WTC11 (cell line): ENCODE measurements at regions of chr9 and their contacts with region 1.

Region 1: DNA sequence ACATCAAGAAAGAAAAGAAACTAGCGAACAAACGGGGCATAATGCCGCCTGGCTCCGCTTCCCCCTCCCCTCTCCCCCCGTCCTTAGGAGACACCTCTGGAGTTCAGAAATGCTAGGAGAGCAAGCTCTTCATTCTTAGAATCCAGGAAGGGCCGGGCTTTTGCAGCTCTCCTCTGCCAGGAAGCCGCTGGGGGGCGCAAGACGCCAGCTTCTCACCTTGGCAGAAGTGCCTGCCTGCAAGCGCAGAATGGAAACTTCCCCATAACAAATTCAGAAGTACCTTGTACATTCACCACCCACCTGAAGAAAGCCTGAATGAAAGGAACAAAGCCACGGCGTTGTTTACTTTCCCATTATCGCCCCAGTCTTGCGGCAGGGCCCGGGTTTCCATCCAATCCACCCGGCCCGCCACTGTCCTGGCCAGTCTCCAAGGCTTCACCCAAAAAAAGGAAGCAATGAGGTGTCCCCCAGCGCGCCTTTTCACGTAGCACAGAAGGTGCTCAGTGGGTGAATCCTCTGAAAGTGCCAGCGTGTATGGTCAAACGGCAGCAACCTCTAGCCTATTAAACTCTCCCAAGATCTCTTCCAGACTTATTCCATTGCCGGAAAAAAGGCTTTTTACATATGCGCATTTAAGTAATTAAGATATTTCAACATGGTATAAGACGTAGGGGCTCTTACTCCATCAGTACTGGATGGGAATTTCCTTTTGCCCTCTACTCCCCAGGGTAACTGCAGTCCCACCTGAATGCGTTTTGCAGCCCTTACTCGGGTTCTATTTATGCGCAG is 1.6 kb upstream of the GADD45G start:
- DNase-seq: peak; percentile 96
- ATAC-seq: peak; percentile 18
- H3K4me3 Mint-ChIP-seq: peak overlapping the region; percentile 77
- H3K27ac Mint-ChIP-seq: peak overlapping the region; percentile 83
- H3K4me1 Mint-ChIP-seq: peaks cover 20% of the 10 kb centered on the region
- H3K27me3 Mint-ChIP-seq: peaks cover 28% of the 10 kb centered on the region
- CTCF ChIP-seq: peak; percentile 66

Region 2: GRCh38 chr9:89437000-89437631 is 166.1 kb before region 1 on chr9:
- CTCF ChIA-PET with region 1: no interaction called
- POLR2A ChIA-PET with region 1: no interaction called
- DNase-seq: no peak
- ATAC-seq: no peak
- H3K4me3 Mint-ChIP-seq: no peak overlapping the region
- H3K27ac Mint-ChIP-seq: peak overlapping the region; percentile 100
- H3K4me1 Mint-ChIP-seq: peaks cover 90% of the 10 kb centered on the region
- H3K27me3 Mint-ChIP-seq: no peaks in the 10 kb centered on the region
- CTCF ChIP-seq: no peak

Region 3: DNA sequence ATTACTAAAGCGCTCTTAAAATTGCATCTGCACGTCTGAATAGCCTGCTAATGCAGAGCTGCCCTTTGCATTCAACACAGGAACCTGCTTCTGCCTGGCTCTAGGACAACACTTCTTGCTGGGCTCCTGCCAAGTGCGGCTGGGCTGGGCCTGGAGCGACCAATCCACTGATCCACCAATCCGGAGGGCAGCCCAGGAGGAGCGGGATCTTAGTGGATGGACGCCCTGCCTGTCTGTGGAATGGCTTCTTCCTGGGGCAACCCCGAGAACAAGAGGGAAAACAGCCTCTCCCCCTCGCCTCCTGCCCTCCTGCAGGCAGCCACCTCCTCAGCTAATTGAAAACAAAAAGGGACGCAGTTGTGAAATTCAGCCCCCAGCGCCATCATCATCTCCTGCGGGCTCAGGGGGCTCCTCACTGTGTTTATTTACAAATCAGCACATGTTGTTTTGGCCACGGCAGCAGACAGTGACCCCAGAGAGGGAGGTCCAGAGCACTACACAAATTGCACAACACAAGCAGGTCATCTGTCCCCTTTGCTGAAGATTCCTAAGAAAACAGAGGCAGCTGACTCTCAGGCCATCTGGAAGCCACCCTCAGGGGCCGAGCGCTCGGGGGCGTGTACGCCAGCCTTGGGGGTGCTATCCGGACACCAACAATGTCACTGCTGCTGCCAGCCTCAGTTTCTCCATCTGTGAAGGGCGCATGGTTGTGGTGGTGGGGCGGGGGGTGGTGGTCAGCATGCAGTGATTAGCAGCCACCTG is 59.0 kb after region 1 on chr9:
- CTCF ChIA-PET with region 1: interaction called, 15 read pairs
- POLR2A ChIA-PET with region 1: interaction called, 6 read pairs
- DNase-seq: peak; percentile 92
- ATAC-seq: peak; percentile 98
- H3K4me3 Mint-ChIP-seq: peak overlapping the region; percentile 25
- H3K27ac Mint-ChIP-seq: peak overlapping the region; percentile 94
- H3K4me1 Mint-ChIP-seq: peaks cover 60% of the 10 kb centered on the region
- H3K27me3 Mint-ChIP-seq: peaks cover 3% of the 10 kb centered on the region; the same call in 1 of the 2 replicates
- CTCF ChIP-seq: no peak

Region 4: DNA sequence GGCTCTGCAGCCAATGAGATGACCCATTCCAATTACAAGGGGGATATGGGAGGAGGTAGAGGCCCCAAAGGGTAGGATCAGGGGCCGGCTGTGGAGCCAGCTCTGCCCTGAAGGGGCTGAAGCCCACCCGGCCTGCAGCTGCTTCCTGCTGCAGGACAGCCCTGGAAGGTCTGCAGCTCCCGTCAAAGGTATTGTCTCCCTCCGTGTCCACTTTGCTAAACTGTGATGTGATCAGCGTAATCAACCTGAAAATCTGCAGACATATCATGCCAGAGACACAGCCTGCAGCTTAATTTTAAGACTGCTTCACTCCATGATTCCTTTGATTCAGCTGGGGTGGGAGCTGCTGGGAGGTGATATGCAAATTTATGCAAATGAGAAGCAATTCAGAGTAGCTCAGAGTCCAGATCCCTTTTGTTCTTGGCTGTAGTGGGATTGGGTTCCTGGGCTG is 92.3 kb after region 1 on chr9:
- CTCF ChIA-PET with region 1: interaction called, 30 read pairs
- POLR2A ChIA-PET with region 1: interaction called, 10 read pairs
- DNase-seq: peak; percentile 36
- ATAC-seq: peak; percentile 96
- H3K4me3 Mint-ChIP-seq: peak overlapping the region; percentile 38
- H3K27ac Mint-ChIP-seq: peak overlapping the region; percentile 96
- H3K4me1 Mint-ChIP-seq: peaks cover 51% of the 10 kb centered on the region
- H3K27me3 Mint-ChIP-seq: peaks cover 4% of the 10 kb centered on the region; the same call in 1 of the 2 replicates
- CTCF ChIP-seq: no peak

Region 5: GRCh38 chr9:89750147-89750861 is 147.1 kb after region 1 on chr9:
- CTCF ChIA-PET with region 1: interaction called, 16 read pairs
- POLR2A ChIA-PET with region 1: no interaction called
- DNase-seq: no peak
- ATAC-seq: peak; percentile 69
- H3K4me3 Mint-ChIP-seq: no peak overlapping the region
- H3K27ac Mint-ChIP-seq: 0 out of 2 replicates have a peak overlapping the region, but pooled peaks have one; percentile 39
- H3K4me1 Mint-ChIP-seq: peaks cover 26% of the 10 kb centered on the region
- H3K27me3 Mint-ChIP-seq: no peaks in the 10 kb centered on the region
- CTCF ChIP-seq: no peak

Region 6: DNA sequence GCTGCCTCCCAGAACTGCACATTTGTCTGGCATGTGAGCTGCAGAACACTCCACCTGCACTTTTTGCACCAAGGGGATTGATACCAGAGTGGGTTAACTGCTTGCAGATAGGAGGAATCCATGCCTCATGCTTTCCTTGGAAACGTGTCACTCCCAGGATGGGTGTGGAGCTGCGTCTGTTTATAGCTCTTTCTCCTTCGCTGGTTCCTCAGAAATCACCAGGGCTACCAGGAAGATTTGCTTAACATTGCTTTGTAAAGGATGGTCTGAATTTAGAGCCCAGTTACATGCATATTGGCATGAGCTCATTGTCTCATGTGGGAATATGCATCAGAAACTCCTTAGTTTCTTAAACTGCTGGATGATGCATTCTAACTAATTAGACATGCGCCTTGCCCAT is 236.3 kb after region 1 on chr9:
- CTCF ChIA-PET with region 1: interaction called, 14 read pairs
- POLR2A ChIA-PET with region 1: no interaction called
- DNase-seq: no peak
- ATAC-seq: no peak
- H3K4me3 Mint-ChIP-seq: no peak overlapping the region
- H3K27ac Mint-ChIP-seq: no peak overlapping the region
- H3K4me1 Mint-ChIP-seq: peaks cover 62% of the 10 kb centered on the region
- H3K27me3 Mint-ChIP-seq: no peaks in the 10 kb centered on the region
- CTCF ChIP-seq: no peak

Region 7: GRCh38 chr9:89945133-89945532 is 342.0 kb after region 1 on chr9:
- CTCF ChIA-PET with region 1: interaction called, 25 read pairs
- POLR2A ChIA-PET with region 1: no interaction called
- DNase-seq: peak; percentile 50
- ATAC-seq: peak; percentile 92
- H3K4me3 Mint-ChIP-seq: no peak overlapping the region
- H3K27ac Mint-ChIP-seq: no peak overlapping the region
- H3K4me1 Mint-ChIP-seq: peaks cover 9% of the 10 kb centered on the region
- H3K27me3 Mint-ChIP-seq: no peaks in the 10 kb centered on the region
- CTCF ChIP-seq: peak; percentile 52; the same call in 1 of the 2 replicates